GM10248 (cell line): ENCODE measurements at regions of chr2 and their contacts with region 1.

Region 1: DNA sequence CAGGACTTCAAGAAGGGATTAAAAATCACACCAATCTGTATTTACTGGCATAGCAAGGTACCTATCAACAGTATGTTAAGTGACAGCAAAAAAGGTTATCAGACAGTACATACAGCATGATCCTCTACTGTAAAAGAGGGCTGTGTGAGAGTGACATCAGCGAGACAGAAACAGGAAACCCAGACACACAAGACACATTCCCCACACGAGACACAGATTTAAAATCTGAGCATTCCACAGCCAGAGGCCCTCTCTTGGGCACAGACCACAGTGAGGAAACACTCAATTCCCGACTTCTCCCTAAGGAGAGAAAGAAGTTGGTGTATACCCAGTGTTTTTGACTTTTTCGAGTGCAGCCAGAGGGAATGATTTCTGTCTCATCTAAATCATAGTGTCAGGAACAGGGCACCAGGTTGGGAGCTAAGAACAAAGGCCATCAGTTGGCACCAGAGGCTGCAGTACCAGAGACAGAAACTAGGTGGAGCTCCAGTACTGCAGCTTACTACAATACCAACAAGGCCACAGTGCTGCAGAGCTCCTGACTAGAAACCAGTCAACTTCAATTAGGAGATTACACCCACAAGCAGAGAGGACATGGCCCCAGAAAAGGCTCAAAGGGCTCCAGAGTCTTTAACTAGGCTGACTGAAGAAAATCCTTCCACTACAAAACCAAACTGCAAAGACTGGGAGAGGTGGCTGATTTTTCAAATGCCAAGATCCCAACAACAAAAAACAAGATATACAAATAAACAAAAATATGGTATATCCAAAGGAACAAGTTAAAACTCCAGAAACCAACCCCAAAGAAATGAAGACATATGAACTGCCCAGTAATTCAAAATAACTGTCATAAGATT is 41.0 kb downstream of the UNC50 start:
- DNase-seq: peak; percentile 60
- CTCF ChIP-seq: peak; percentile 97

Region 2: GRCh38 chr2:98637401-98638147 is 11.8 kb before region 1 on chr2:
- CTCF ChIA-PET with region 1: interaction called, 14 read pairs
- POLR2A ChIA-PET with region 1: no interaction called
- DNase-seq: peak; percentile 28
- CTCF ChIP-seq: no peak

Region 3: DNA sequence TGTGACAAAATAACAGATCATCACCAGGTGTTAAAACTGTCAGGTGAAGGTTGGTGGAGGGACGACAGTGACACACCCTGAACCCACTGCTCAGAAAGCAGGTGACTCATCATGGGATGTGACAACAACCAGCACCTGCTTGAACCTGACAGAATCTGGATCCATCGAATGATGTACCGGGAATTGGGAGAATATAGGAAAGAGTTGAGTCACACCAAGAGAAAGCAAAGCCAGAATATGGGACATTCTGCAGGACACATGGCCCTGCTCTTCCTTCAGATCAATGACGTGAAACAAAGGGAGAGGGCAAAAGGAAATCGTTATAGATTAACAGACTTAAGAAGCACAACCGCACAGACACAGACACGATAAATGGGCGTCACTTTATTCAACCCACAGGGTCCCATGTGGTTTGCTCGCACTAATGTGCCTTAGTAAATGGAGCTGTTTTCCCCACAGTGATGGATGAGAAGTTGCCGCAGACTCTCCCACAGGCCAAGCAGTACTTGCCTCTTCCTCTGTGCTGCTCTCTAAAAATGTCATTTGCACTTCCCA is 186.5 kb after region 1 on chr2:
- CTCF ChIA-PET with region 1: interaction called, 44 read pairs
- POLR2A ChIA-PET with region 1: no interaction called
- DNase-seq: no peak
- CTCF ChIP-seq: no peak

Region 4: DNA sequence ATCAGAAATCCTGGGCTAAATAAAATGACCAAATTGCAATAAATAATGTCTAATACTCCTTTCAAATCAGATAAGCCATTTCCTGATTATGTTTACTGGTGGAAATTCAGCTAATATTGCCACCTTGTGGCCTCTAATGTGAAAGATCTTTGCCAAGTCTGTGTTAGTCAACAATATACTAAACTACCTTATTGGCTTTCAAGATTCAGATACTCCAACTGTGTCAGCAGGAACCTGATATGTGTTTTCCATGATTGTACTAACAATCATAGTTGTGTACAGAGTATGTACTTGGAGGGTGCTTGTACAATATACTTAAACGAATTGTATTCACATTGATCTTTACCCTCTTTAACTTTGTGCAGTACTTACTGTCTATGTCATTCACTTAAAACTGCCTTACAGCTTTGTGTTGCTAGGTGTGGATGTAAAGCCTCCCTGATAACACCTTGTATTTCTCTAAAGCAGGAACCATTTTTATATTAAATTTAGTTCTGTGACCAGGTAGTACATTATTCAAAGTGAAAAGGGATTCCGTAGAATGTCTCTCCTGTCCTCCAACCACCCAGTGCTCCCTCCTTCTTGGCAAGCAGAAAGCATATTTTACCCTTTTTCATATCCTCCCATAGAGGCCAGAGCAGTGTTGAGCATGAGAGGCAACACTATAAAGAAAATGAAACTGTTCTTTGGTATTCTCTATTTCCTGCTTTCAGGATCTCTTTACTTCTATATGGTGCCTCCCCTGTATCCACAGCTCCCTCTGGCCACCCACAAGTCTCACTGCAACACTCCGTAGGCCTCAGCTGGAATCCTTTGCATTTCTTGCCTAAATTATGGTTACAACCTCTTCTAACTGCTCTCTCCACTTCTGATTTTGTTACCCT is 417.0 kb after region 1 on chr2:
- CTCF ChIA-PET with region 1: interaction called, 29 read pairs
- POLR2A ChIA-PET with region 1: no interaction called
- DNase-seq: peak; percentile 41
- CTCF ChIP-seq: peak; percentile 49